B cell (primary cell): ENCODE measurements at regions of chr9 and their contacts with region 1.

Region 1: DNA sequence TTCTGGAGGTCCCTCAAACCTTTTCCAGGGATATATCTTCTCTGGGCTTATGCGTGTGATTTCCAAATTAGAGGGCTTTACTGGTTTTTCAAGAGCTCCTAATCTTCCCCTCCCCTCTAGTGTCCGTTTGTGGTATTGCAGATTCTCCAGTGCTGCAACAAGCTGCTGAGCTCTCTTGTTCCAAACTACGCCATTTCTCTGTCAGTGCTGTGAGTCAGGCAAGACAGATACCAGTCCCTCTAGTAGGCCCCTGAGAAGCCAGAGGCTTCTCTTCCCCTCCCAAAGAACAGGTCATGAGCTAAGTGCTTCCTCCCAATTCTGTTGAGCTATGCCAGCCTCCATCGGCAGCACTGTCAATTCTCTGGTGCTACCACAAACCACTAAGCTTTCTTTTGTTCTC is 149.5 kb downstream of the FANCC start:
- DNase-seq: peak; percentile 52
- ATAC-seq: peak; percentile 33
- H3K4me3 ChIP-seq: no peak overlapping the region
- H3K4me3 Mint-ChIP-seq: no peak overlapping the region
- H3K27ac ChIP-seq: no peak overlapping the region
- H3K27ac Mint-ChIP-seq: no peak overlapping the region
- H3K4me1 ChIP-seq: no peaks in the 10 kb centered on the region
- H3K4me1 Mint-ChIP-seq: no peaks in the 10 kb centered on the region
- H3K27me3 ChIP-seq: no peaks in the 10 kb centered on the region
- H3K27me3 Mint-ChIP-seq: no peaks in the 10 kb centered on the region
- CTCF ChIP-seq: peak; percentile 79

Region 2: GRCh38 chr9:94867281-94867841 is 300.6 kb before region 1 on chr9:
- CTCF ChIA-PET with region 1: no interaction called
- POLR2A ChIA-PET with region 1: no interaction called
- intact Hi-C with region 1: no loop called
- DNase-seq: no peak
- ATAC-seq: no peak
- H3K4me3 ChIP-seq: no peak overlapping the region
- H3K4me3 Mint-ChIP-seq: no peak overlapping the region
- H3K27ac ChIP-seq: no peak overlapping the region
- H3K27ac Mint-ChIP-seq: no peak overlapping the region
- H3K4me1 ChIP-seq: peaks cover 0 to 6% of the 10 kb centered on the region in 2 donors
- H3K4me1 Mint-ChIP-seq: peaks cover 16% of the 10 kb centered on the region
- H3K27me3 ChIP-seq: no peaks in the 10 kb centered on the region
- H3K27me3 Mint-ChIP-seq: no peaks in the 10 kb centered on the region
- CTCF ChIP-seq: no peak

Region 3: GRCh38 chr9:95181226-95181818 is 13.3 kb after region 1 on chr9:
- CTCF ChIA-PET with region 1: interaction called, 11 read pairs
- POLR2A ChIA-PET with region 1: no interaction called
- intact Hi-C with region 1: no loop called
- DNase-seq: peak; percentile 23
- ATAC-seq: no peak
- H3K4me3 ChIP-seq: no peak overlapping the region
- H3K4me3 Mint-ChIP-seq: no peak overlapping the region
- H3K27ac ChIP-seq: no peak overlapping the region
- H3K27ac Mint-ChIP-seq: no peak overlapping the region
- H3K4me1 ChIP-seq: no peaks in the 10 kb centered on the region
- H3K4me1 Mint-ChIP-seq: no peaks in the 10 kb centered on the region
- H3K27me3 ChIP-seq: no peaks in the 10 kb centered on the region
- H3K27me3 Mint-ChIP-seq: no peaks in the 10 kb centered on the region
- CTCF ChIP-seq: peak; percentile 85

Region 4: GRCh38 chr9:95211028-95211427 is 43.0 kb after region 1 on chr9:
- CTCF ChIA-PET with region 1: no interaction called
- POLR2A ChIA-PET with region 1: no interaction called
- intact Hi-C with region 1: no loop called
- DNase-seq: no peak
- ATAC-seq: no peak
- H3K4me3 ChIP-seq: no peak overlapping the region
- H3K4me3 Mint-ChIP-seq: no peak overlapping the region
- H3K27ac ChIP-seq: no peak overlapping the region
- H3K27ac Mint-ChIP-seq: no peak overlapping the region
- H3K4me1 ChIP-seq: peaks cover 0 to 4% of the 10 kb centered on the region in 2 donors
- H3K4me1 Mint-ChIP-seq: peaks cover 10% of the 10 kb centered on the region
- H3K27me3 ChIP-seq: no peaks in the 10 kb centered on the region
- H3K27me3 Mint-ChIP-seq: no peaks in the 10 kb centered on the region
- CTCF ChIP-seq: no peak